ENCODE measurements at regions of chr12 and their contacts with region 1.

Region 1: GRCh38 chr12:78562368-78563205 is 302.0 kb upstream of the SYT1 start:
- DNase-seq: no peak
- ATAC-seq: peak; percentile 48; the same call in 2 of the 3 replicates
- H3K4me3 ChIP-seq: no peak overlapping the region
- H3K27ac ChIP-seq: no peak overlapping the region
- H3K4me1 ChIP-seq: no peaks in the 10 kb centered on the region
- H3K27me3 ChIP-seq: no peaks in the 10 kb centered on the region
- CTCF ChIP-seq: peak; percentile 19 to 36 (median 34); a peak in 3 of 6 replicates
- EP300 ChIP-seq: no peak
- POLR2A ChIP-seq: no peak
- RAD21 ChIP-seq: peak; percentile 26; the same call in 1 of the 2 replicates

Region 2: DNA sequence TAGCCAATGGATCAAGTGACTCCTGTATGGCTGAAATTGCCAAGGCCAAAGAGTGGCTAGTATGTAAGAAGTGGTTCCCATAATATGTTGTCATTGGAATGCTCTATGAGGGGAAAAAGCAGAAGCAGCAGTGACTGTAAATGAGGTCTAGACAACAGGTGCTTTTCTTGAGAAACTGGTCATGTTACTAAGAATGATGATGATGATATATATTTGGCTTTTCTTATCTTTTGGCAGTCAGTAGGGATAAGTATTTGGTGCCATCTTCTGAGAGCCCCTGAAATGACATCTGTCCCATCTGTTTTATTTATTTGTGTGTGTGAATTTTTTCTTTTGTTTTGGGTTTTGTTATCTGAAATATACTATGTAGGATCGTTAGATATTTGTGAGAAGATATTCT is 443.7 kb after region 1 on chr12:
- CTCF ChIA-PET with region 1: interaction called, 4 read pairs
- POLR2A ChIA-PET with region 1: no interaction called
- RAD21 ChIA-PET with region 1: no interaction called
- SMC1A ChIA-PET with region 1: no interaction called
- in situ Hi-C with region 1: no loop called
- intact Hi-C with region 1: loop called (anchors 10 kb)
- DNase-seq: no peak
- ATAC-seq: peak; percentile 56
- H3K4me3 ChIP-seq: no peak overlapping the region
- H3K27ac ChIP-seq: no peak overlapping the region
- H3K4me1 ChIP-seq: no peaks in the 10 kb centered on the region
- H3K27me3 ChIP-seq: no peaks in the 10 kb centered on the region; a peak in 1 of 4 replicates
- CTCF ChIP-seq: no peak; a peak in 1 of 6 replicates
- EP300 ChIP-seq: no peak
- POLR2A ChIP-seq: no peak
- RAD21 ChIP-seq: 0 out of 2 replicates have a peak, but pooled peaks have one; percentile 39

Region 3: GRCh38 chr12:79174626-79175025 is 612.0 kb after region 1 on chr12:
- CTCF ChIA-PET with region 1: interaction called, 16 read pairs
- POLR2A ChIA-PET with region 1: no interaction called
- RAD21 ChIA-PET with region 1: interaction called, 5 read pairs
- SMC1A ChIA-PET with region 1: interaction called, 6 read pairs
- in situ Hi-C with region 1: no loop called
- intact Hi-C with region 1: loop called (anchors 5 kb)
- DNase-seq: no peak
- ATAC-seq: peak; percentile 86
- H3K4me3 ChIP-seq: no peak overlapping the region
- H3K27ac ChIP-seq: no peak overlapping the region
- H3K4me1 ChIP-seq: no peaks in the 10 kb centered on the region
- H3K27me3 ChIP-seq: no peaks in the 10 kb centered on the region
- CTCF ChIP-seq: peak in 2 of 3 experiments; percentile 14 to 51; a peak in 1 of 6 replicates
- EP300 ChIP-seq: no peak
- POLR2A ChIP-seq: no peak
- RAD21 ChIP-seq: peak; percentile 56

Region 4: GRCh38 chr12:79344855-79345847 is 782.6 kb after region 1 on chr12:
- CTCF ChIA-PET with region 1: interaction called, 3 read pairs
- POLR2A ChIA-PET with region 1: no interaction called
- RAD21 ChIA-PET with region 1: interaction called, 5 read pairs
- SMC1A ChIA-PET with region 1: interaction called, 3 read pairs
- in situ Hi-C with region 1: no loop called
- intact Hi-C with region 1: loop called (anchors 2 kb)
- DNase-seq: peak; percentile 2
- ATAC-seq: peak; percentile 96
- H3K4me3 ChIP-seq: no peak overlapping the region
- H3K27ac ChIP-seq: no peak overlapping the region
- H3K4me1 ChIP-seq: no peaks in the 10 kb centered on the region
- H3K27me3 ChIP-seq: no peaks in the 10 kb centered on the region
- CTCF ChIP-seq: peak; percentile 51 to 72 (median 64)
- EP300 ChIP-seq: no peak
- POLR2A ChIP-seq: no peak
- RAD21 ChIP-seq: peak; percentile 64

Measured in GM12878 (cell line).